ENCODE measurements at regions of chr1 and their contacts with region 1.

Region 1: GRCh38 chr1:228810878-228811711 is 75.8 kb downstream of the RHOU start:
- DNase-seq: peak; percentile 46 to 80
- H3K4me3 ChIP-seq: no peak overlapping the region
- H3K27ac ChIP-seq: no peak overlapping the region
- H3K4me1 ChIP-seq: peaks cover 12% of the 10 kb centered on the region
- H3K27me3 ChIP-seq: no peaks in the 10 kb centered on the region
- CTCF ChIP-seq: no peak
- POLR2A ChIP-seq: no peak

Region 2: DNA sequence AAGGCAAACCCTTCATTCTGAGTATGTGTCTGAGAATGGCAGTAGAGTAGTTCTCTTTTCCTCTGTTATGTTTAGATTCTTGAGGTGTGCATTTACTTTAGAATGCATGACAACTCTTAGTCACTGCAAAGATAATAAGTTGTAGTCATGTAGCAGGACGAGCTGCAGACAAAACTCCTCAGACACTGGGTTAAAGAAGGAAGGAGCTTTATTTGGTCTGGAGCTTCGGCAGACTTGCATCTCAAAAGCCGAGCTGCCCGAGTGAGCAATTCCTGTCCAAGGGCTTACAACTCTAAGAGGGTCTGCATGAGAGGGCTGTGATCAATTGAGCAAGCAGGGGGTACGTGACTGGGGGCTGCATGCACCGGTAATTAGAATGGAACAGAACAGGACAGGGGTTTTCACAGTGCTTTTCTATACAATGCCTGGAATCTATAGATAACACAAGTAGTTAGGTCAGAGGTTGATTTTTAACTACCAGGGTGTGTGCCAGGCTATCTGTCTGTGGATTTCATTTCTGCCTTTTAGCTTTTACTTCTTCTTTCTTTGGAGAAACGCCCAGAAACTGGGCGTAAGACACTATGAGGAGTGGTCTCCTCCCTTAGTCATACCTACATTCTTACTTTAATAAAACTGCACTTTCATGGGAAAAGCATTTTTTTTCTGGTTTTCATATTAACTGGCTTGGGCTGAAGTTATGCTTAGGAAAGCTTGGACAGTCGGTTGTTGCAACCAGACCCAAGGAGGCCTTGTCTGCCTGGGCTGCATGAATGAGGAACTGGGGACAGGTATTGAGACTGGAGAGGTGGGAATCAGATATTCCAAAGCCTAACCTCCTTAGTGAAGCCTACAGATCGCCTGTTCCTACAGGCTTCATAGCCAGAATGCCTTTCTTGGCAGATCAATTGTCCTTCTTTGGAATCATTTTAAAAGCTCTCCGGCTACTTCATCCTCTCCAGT is 39.3 kb after region 1 on chr1:
- intact Hi-C with region 1: loop called (anchors 2 kb)
- DNase-seq: peak; percentile 42 to 49
- H3K4me3 ChIP-seq: no peak overlapping the region
- H3K27ac ChIP-seq: no peak overlapping the region
- H3K4me1 ChIP-seq: no peaks in the 10 kb centered on the region
- H3K27me3 ChIP-seq: no peaks in the 10 kb centered on the region
- CTCF ChIP-seq: no peak
- POLR2A ChIP-seq: no peak

Region 3: GRCh38 chr1:229094476-229095311 is 283.6 kb after region 1 on chr1:
- intact Hi-C with region 1: no loop called
- DNase-seq: no peak
- H3K4me3 ChIP-seq: no peak overlapping the region
- H3K27ac ChIP-seq: peak overlapping the region; percentile 33
- H3K4me1 ChIP-seq: peaks cover 22% of the 10 kb centered on the region
- H3K27me3 ChIP-seq: no peaks in the 10 kb centered on the region
- CTCF ChIP-seq: no peak
- POLR2A ChIP-seq: no peak